ENCODE measurements at regions of chr3 and their contacts with region 1.

Region 1: DNA sequence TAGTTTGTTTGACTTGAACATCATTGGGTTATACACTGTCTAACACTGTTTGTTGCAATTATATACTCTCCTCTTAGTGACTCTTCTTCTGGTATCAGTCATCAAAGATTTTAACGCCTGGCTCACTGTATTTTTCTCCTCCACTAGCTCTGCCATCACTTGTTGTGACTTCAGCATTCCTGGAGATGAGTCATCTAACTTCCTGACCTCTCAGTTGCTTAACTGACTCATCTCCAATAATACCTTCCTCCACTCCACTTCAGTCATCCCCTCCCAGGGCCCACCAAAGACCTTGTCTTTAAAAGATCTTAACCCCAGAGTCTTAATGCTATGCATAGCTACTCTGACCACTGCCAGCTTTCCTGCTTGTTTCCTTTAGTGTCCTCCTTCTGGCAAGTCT is 28.6 kb upstream of the CLSTN2 start:
- DNase-seq: no peak
- ATAC-seq: no peak
- H3K4me3 ChIP-seq: no peak overlapping the region
- H3K27ac ChIP-seq: no peak overlapping the region
- H3K4me1 ChIP-seq: peaks cover 2% of the 10 kb centered on the region
- H3K27me3 ChIP-seq: no peaks in the 10 kb centered on the region

Region 2: DNA sequence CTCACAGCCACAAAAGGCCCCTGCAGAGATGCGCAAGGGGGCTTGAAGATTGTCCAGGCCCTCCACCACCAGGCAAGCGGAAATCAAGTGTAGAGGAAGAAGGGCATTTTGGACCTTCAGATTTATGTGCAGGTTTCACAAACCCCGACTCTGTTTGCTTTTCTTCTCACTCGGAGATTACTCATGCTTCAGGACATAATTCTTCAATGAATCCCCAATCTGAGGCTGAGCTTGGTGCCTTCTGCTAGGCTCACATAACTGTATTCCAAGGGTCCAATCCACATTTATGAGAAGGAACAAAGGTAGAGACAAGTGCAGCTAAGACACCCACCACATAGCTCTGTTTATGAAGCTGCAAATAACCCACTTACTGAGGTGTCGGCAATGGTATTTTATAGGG is 178.0 kb before region 1 on chr3:
- intact Hi-C with region 1: loop called in 1 of 4 experiments (anchors 10 kb)
- DNase-seq: no peak
- ATAC-seq: no peak
- H3K4me3 ChIP-seq: no peak overlapping the region
- H3K27ac ChIP-seq: no peak overlapping the region
- H3K4me1 ChIP-seq: no peaks in the 10 kb centered on the region
- H3K27me3 ChIP-seq: no peaks in the 10 kb centered on the region

Region 3: DNA sequence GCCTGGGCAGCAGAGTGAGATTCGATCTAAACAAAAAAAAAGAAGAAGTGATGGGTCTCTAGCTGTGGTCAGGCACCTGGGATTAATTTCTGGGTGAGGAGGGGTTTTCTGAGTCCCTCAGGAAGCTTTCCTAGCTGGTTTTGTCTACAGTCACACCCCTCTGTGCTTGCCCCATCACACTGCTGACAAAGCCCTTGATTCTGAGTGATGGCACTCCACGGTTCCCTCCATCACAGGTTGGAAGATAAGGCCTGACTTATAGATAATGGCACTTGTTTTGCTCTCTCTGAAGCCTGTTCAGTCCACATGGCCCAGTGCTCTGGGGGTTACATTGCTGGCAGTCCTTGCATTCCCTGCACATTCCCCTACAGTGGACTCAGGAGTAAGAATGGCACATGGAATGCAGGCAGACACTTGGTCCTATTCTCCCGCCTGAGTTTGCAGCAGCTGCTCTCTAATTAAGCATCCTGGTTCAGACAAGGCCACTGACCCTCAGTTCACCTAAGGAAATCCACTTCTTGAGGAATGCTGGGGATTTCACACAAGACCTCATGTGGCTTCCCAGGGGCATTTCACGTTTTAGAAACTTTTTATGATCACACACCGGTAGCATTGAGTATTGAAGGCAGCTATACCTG is 147.6 kb before region 1 on chr3:
- intact Hi-C with region 1: no loop called
- DNase-seq: no peak
- ATAC-seq: peak; percentile 54 to 77
- H3K4me3 ChIP-seq: no peak overlapping the region
- H3K27ac ChIP-seq: no peak overlapping the region
- H3K4me1 ChIP-seq: no peaks in the 10 kb centered on the region
- H3K27me3 ChIP-seq: no peaks in the 10 kb centered on the region

Measured in right cardiac atrium (tissue), 5 donors.